Activated CD4-positive, alpha-beta memory T cell treated with anti-CD3 and anti-CD28 coated beads for 36 hours (primary cell): ENCODE measurements at regions of chr19 and their contacts with region 1.

Region 1: DNA sequence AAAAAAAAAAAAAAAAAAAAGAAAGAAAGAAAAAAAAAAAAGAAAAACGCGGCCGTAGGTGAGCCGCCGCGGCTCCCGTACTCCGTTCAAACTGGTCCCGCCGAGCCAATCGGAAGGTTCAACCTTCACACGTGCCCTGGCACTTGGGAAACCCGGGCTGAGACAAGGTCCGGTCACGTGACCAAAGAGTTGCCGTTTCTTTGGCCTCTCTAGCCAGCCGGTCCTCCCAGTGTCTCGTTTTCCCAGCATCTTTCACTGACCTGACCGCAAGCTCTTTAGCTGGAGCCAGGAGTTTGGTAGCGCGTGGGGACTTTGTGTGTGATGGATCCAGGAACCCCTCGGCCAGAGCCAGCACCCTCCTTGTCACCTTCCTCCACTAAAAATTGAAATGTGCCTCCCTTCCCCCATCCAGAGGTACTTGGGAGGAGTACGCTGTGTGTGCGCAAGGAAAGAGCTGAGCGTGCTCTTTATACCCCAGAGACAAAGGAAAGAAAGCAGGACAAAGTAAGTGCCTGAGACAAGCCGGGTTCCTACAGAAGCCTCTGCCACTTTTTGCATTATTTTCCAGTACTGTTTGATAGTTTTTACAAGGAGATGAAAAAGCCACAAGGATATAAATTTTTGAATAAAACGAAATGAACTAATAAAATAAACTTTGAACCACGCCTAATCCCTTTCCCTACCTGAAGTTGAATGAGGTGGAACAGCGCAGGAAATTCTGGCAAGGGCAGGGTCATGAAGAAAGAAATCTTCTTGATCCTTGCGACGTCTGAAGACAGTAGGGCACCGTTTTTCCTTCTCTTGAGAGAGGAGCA is 959 bp downstream of the TNPO2 start:
- DNase-seq: peak; percentile 96
- H3K4me3 Mint-ChIP-seq: peak overlapping the region; percentile 92
- H3K27ac Mint-ChIP-seq: peak overlapping the region; percentile 95
- H3K4me1 Mint-ChIP-seq: peaks cover 28% of the 10 kb centered on the region
- H3K27me3 Mint-ChIP-seq: no peaks in the 10 kb centered on the region

Region 2: GRCh38 chr19:12681074-12681951 is 41.5 kb before region 1 on chr19 and contains the start of gene DHPS:
- CTCF ChIA-PET with region 1: interaction called, 3 read pairs
- POLR2A ChIA-PET with region 1: interaction called, 3 read pairs
- intact Hi-C with region 1: loop called (anchors 5 kb)
- DNase-seq: peak; percentile 95
- H3K4me3 Mint-ChIP-seq: peak within 1 kb of the TSS; percentile 95
- H3K27ac Mint-ChIP-seq: peak within 1 kb of the TSS; percentile 94
- H3K4me1 Mint-ChIP-seq: peaks cover 22% of the 10 kb centered on the region
- H3K27me3 Mint-ChIP-seq: no peaks in the 10 kb centered on the region
- total RNA-seq, gene DHPS: 126 to 127 TPM

Region 3: GRCh38 chr19:12696366-12697335 is 26.1 kb before region 1 on chr19 and contains the start of gene FBXW9:
- CTCF ChIA-PET with region 1: no interaction called
- POLR2A ChIA-PET with region 1: interaction called, 14 read pairs
- intact Hi-C with region 1: loop called (anchors 2 kb)
- DNase-seq: peak; percentile 98
- H3K4me3 Mint-ChIP-seq: peak within 1 kb of the TSS; percentile 84
- H3K27ac Mint-ChIP-seq: peak within 1 kb of the TSS; percentile 87
- H3K4me1 Mint-ChIP-seq: peaks cover 14% of the 10 kb centered on the region
- H3K27me3 Mint-ChIP-seq: no peaks in the 10 kb centered on the region
- total RNA-seq, gene FBXW9: 6.6 to 7.0 TPM

Region 4: DNA sequence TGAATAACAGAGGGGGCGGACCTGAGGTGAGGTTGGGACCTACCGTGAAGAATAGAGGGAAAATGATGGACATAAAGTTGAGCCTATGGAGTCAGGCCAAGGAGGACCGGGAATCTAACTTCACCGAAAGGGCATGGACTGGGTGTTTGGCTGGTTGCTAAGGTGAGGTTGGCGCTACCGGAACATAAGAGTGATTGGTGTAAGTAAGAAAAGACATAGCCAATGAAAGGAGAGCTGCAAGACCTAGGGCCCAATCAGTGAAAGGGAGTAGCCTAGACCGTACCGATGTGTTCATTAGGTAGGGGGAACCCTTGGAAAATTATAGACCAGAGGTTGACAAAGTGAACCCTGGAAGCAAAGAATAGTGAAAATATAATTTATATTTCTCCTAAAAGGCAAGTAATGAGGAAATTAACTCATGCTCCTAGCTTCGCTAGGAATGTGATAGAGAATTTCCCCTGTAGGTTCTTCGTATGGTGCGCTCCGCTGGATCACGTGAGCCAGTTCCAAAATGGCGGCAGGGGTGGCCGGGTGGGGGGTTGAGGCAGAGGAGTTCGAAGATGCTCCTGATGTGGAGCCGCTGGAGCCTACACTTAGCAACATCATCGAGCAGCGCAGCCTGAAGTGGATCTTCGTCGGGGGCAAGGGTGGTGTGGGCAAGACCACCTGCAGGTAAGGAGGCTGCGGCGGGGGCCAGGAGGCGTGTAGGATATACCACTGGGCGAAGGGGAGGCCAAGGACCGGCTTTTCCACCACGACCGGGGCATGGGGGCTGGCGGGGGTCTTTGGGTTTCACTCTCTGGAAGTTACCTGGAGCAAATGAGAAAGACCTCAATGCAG is 14.4 kb after region 1 on chr19 and contains the start of gene GET3:
- CTCF ChIA-PET with region 1: interaction called, 44 read pairs
- POLR2A ChIA-PET with region 1: interaction called, 73 read pairs
- intact Hi-C with region 1: loop called (anchors 1 kb)
- DNase-seq: peak; percentile 88
- H3K4me3 Mint-ChIP-seq: peak within 1 kb of the TSS; percentile 100
- H3K27ac Mint-ChIP-seq: peak within 1 kb of the TSS; percentile 93
- H3K4me1 Mint-ChIP-seq: peaks cover 33% of the 10 kb centered on the region
- H3K27me3 Mint-ChIP-seq: no peaks in the 10 kb centered on the region
- total RNA-seq, gene GET3: 54.2 TPM

Region 5: DNA sequence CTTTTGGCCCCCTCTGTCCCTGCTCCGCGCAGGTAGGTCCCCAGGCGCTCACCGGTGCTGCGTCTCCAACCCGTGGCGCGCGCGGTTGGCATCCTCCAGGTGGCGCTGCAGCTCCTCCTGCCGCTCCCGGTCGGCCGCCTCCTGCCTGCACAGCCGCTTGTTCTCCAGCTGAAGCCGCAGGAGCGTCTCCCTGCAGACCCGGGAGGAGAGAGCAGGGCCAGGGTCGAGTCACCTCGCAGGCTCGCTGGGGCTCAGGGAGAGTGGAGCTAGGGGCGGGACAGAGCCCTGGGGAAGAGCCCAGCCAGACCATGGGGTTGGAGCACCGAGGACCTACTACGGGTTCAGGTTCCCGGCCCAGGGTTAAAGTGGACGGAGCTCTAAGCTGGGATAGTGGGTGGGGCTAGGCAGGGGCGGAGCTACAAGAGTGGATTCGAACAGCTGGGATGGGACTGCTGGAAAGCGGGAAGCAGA is 43.3 kb after region 1 on chr19:
- CTCF ChIA-PET with region 1: interaction called, 60 read pairs
- POLR2A ChIA-PET with region 1: interaction called, 5 read pairs
- intact Hi-C with region 1: no loop called
- DNase-seq: peak; percentile 91
- H3K4me3 Mint-ChIP-seq: peak overlapping the region; percentile 43
- H3K27ac Mint-ChIP-seq: no peak overlapping the region
- H3K4me1 Mint-ChIP-seq: peaks cover 12% of the 10 kb centered on the region
- H3K27me3 Mint-ChIP-seq: no peaks in the 10 kb centered on the region